HEK293T (cell line): ENCODE measurements at regions of chr4 and their contacts with region 1.

Region 1: DNA sequence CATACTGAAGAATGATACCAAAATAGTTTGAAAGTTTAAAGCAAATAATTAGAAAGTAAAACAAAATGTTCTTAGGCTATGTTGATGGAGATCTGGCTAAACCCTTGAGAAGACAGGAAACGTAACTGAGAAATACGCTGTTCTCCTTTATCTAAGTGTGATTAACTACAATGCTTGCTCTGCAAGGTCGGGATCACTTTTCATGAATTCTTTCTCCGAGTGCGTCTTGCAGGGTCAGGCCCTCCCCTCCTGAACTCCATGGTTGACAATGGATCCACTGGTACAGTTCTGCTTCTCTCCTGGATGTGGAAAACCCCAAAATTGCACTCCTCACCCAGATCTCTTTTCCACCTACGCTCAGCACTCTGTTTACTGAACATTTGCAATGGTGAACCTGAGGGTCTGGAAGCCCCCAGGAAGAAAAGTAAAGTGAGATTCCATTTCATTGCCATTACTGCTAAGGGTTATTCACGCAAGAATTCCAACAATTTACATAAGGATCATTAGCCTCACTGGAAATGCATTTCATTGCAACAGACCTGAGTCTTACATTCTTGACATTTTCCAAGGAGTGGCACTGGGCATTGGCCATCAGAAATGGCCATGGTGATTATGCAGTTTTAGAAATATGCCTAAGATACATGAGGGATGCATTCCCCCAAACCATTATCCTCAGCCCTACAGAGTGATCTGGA is 24.6 kb upstream of the WWC2 start:
- DNase-seq: no peak

Region 2: DNA sequence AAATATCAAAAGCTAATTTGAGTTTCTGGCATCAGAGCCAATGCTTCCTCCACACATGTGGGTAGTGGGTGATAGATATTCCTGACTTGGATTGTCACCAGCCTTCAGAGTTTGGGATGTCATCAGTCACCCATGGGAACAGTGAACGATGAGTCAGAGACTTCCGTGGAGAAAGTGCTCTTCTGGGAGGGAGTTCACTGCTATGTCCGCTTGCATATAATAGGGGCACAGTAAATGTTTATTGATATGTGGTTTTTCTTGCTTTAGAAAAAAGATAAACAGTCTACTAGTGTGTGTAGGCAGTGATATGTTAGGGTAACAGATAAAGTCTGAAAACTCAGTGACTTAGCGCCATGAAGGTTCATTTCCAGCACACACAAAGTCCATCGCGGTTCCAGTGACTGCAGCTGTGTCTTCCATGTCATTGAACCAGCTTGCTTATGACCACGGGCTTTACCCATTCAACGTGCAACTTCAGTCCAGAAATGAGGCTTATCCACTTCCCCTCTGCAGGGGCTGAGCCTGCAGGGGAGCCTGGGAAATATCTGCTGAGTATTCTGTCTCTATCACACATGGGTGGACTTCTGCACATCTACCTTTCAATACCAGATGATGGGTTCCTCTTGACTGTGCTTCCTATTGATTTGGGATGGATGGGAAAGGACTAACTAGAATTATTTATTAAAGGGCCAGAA is 63.1 kb before region 1 on chr4:
- CTCF ChIA-PET with region 1: no interaction called
- POLR2A ChIA-PET with region 1: no interaction called
- DNase-seq: no peak

Region 3: GRCh38 chr4:183249857-183250256 is 175.4 kb after region 1 on chr4:
- CTCF ChIA-PET with region 1: interaction called, 30 read pairs
- POLR2A ChIA-PET with region 1: no interaction called
- DNase-seq: peak; percentile 10

Region 4: DNA sequence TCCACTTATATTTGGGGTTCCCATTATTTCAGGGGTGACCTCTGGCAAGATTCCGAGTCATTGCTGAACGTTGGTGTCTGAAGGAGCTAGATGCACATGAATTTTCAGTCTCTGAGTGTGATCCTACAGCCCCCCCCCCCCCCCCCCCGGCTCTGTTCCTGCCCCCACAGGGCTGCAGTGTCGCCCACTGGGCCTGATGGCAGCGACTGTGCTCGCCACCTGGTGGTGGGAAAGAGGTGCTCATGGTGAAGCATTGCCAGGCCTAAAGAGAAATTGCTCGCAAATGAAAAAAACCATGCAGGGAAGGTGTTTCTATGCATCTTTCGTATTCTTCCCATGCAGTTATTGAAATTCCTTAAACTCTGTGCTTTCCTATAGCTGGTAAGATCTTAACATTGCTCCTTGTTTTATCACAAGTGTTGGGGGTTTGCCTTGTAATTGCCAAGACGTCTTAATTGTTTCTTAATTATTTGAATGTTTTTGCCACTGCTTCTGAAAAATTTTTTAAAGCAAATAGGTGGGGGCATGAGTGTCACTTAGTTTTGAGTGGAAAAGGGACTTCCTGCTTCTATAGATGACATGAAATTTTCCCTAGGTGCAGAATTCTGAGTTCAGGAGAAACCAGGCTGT is 182.4 kb after region 1 on chr4:
- CTCF ChIA-PET with region 1: interaction called, 35 read pairs
- POLR2A ChIA-PET with region 1: no interaction called
- DNase-seq: peak; percentile 57

Region 5: DNA sequence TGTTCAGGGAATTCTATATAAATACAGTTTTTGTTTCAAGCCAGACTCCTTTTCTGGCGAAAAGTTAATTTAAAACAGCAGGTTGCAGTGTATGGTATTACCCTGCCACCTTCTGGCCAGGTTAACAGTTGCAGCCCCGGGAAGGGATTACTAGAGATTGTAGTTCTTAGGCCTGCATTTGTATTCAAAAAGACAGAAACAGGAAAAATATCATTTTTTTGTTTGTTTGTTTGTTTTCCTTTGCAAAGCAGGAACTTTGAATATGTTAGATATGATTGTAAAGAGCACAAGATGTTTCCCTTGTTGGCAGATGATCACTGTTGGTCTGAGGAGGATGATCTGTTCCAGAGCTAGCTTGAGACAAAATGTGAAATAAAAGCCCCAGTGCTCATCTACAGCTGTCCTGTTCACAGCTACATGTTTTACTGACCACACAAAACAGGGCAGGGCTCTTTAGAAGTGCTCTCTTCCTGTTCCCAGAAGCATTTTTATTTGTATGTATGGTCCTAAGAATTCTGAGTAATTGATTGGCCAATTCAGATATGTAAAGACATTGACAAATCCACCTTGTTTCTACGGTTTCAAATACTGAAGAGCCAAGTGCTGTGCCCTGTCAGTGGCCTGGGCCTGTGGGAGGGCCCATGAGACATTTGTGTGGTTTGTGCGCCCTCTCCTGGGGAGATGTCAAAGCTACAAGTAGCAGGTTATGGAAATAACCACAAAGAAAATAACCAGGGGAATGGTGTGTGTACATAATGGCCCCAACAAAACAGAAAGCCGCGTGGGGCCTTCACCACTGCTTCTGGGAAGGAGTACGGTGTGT is 187.7 kb after region 1 on chr4:
- CTCF ChIA-PET with region 1: interaction called, 35 read pairs
- POLR2A ChIA-PET with region 1: no interaction called
- DNase-seq: peak; percentile 61

Region 6: DNA sequence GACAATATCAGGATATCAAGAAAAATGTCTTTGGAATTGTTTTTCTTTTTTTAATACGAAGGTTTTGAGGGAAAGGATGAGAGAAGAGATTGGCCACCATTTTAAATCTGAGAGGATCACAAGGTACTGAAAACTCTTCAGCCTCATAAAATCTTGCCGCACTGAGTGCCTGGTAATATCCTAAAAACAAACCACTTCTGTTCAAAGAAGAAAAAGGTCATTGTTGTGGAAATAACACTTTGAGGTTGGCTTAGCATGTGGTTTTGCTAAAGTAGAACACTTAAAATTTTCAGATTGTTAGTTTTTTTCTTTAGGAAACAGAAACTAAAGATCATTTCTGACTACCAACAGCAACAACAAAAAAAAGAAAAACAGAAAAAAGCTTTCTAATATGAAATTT is 246.6 kb after region 1 on chr4:
- CTCF ChIA-PET with region 1: no interaction called
- POLR2A ChIA-PET with region 1: no interaction called
- DNase-seq: no peak